ENCODE measurements at regions of chr5 and their contacts with region 1.

Region 1: GRCh38 chr5:39177631-39177964 is 41.8 kb downstream of the FYB1 start:
- DNase-seq: peak in 1 of 2 donors; percentile 83
- ATAC-seq: peak; percentile 74 to 90 (median 81)
- H3K4me3 ChIP-seq: peak overlapping the region; percentile 4
- H3K4me3 Mint-ChIP-seq: peak overlapping the region; percentile 75
- H3K27ac ChIP-seq: peak overlapping the region; percentile 87
- H3K27ac Mint-ChIP-seq: peak overlapping the region; percentile 86 to 87
- H3K4me1 ChIP-seq: peaks cover 49% of the 10 kb centered on the region
- H3K4me1 Mint-ChIP-seq: peaks cover 90 to 92% of the 10 kb centered on the region in 2 donors
- H3K27me3 ChIP-seq: no peaks in the 10 kb centered on the region
- H3K27me3 Mint-ChIP-seq: no peaks in the 10 kb centered on the region
- CTCF ChIP-seq: no peak

Region 2: GRCh38 chr5:38639377-38640332 is 537.9 kb before region 1 on chr5:
- intact Hi-C with region 1: no loop called
- DNase-seq: no peak
- ATAC-seq: no peak
- H3K4me3 ChIP-seq: no peak overlapping the region
- H3K4me3 Mint-ChIP-seq: no peak overlapping the region
- H3K27ac ChIP-seq: no peak overlapping the region
- H3K27ac Mint-ChIP-seq: no peak overlapping the region
- H3K4me1 ChIP-seq: no peaks in the 10 kb centered on the region
- H3K4me1 Mint-ChIP-seq: no peaks in the 10 kb centered on the region
- H3K27me3 ChIP-seq: no peaks in the 10 kb centered on the region
- H3K27me3 Mint-ChIP-seq: no peaks in the 10 kb centered on the region
- CTCF ChIP-seq: no peak

Region 3: DNA sequence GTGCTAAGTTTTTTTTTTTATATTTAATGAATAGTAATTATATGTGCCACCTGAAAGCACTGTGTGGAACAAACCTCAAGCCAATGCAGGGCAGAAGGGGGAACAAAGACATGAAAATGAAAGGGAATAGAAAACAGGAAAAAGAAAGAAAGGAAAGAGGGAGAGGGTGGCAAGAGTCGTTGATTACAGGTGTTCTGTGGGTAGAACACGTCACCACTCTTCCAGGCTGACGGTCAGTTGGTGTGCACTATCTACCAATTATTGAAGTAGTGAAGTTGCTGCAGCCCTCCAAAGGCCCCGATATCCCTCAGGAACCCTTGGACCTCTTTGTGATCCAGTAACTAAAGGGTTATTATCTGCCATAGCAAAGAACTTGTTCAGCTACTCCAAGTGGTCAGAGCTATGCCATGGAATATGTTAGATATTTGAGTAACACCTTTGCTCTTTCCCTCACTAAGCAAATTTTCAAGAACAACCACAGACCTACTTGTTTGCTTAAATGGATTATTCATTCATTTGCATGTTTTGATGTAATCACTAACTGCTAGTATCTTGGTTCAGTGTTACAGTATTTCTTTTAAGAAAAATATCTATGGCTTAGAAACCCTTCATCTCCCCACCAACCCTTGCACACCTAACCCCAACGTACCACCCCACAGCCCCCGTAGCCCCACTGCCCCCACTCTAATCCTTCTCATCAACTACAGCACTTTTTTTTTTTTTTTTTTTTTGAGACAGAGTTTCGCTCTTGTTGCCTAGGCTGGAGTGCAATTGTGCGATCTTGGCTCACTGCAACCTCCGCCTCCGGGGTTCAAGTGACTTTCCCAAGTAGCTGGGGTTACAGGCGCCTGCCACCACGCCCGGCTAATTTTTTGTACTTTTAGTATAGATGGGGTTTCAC is 10.5 kb after region 1 on chr5:
- intact Hi-C with region 1: loop called (anchors 1 kb)
- DNase-seq: peak in 1 of 2 donors; percentile 60
- ATAC-seq: peak; percentile 19 to 63 (median 38)
- H3K4me3 ChIP-seq: no peak overlapping the region
- H3K4me3 Mint-ChIP-seq: peak overlapping the region; percentile 75
- H3K27ac ChIP-seq: peak overlapping the region; percentile 69
- H3K27ac Mint-ChIP-seq: peak overlapping the region; percentile 76 to 96
- H3K4me1 ChIP-seq: peaks cover 49% of the 10 kb centered on the region
- H3K4me1 Mint-ChIP-seq: peaks cover 83 to 84% of the 10 kb centered on the region in 2 donors
- H3K27me3 ChIP-seq: no peaks in the 10 kb centered on the region
- H3K27me3 Mint-ChIP-seq: no peaks in the 10 kb centered on the region
- CTCF ChIP-seq: no peak

Region 4: GRCh38 chr5:39209924-39210323 is 32.3 kb after region 1 on chr5:
- intact Hi-C with region 1: loop called (anchors 1 kb)
- DNase-seq: peak; percentile 66 to 92
- ATAC-seq: peak; percentile 69 to 86 (median 85)
- H3K4me3 ChIP-seq: no peak overlapping the region
- H3K4me3 Mint-ChIP-seq: peak overlapping the region; percentile 87
- H3K27ac ChIP-seq: peak overlapping the region; percentile 83
- H3K27ac Mint-ChIP-seq: peak overlapping the region; percentile 84 to 96
- H3K4me1 ChIP-seq: peaks cover 61% of the 10 kb centered on the region
- H3K4me1 Mint-ChIP-seq: peaks cover 86 to 94% of the 10 kb centered on the region in 2 donors
- H3K27me3 ChIP-seq: no peaks in the 10 kb centered on the region
- H3K27me3 Mint-ChIP-seq: no peaks in the 10 kb centered on the region
- CTCF ChIP-seq: no peak

Measured in natural killer cell (primary cell).